HepG2 (cell line): ENCODE measurements at regions of chr6 and their contacts with region 1.

Region 1: GRCh38 chr6:31158140-31158862 is at the start of gene TCF19:
- DNase-seq: peak; percentile 99
- ATAC-seq: peak; percentile 94
- H3K4me3 ChIP-seq: peak within 1 kb of the TSS; percentile 76 to 90 (median 87)
- H3K27ac ChIP-seq: peak within 1 kb of the TSS; percentile 66
- H3K4me1 ChIP-seq: peaks cover 30% of the 10 kb centered on the region
- H3K27me3 ChIP-seq: no peaks in the 10 kb centered on the region
- CTCF ChIP-seq: no peak
- EP300 ChIP-seq: no peak
- POLR2A ChIP-seq: peak in 1 of 2 experiments; percentile 58; a peak in 1 of 4 replicates
- RAD21 ChIP-seq: no peak
- total RNA-seq, gene TCF19: 20.5 and 22.2 TPM in 2 replicates

Region 2: DNA sequence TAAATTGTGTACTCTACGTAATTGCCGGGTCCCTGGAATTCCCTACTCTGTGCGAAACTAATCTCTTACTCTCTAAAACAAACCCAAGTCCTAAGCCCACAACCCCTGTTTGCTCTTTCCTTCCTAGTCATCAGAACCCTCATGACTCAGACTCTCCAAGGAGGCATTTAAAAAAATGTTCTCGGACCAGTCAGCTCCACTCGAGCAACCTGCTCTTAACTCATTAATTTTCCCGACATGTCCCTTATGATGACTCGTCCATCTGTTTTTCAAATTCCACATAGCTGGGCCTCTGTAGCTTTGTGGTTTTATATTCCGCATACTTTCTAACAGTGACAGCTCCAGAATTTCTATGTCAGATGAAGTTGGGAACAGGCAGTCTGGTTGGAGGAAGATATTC is 150.6 kb before region 1 on chr6:
- CTCF ChIA-PET with region 1: no interaction called
- POLR2A ChIA-PET with region 1: no interaction called
- in situ Hi-C with region 1: no loop called
- intact Hi-C with region 1: no loop called
- DNase-seq: no peak
- ATAC-seq: no peak
- H3K4me3 ChIP-seq: no peak overlapping the region
- H3K27ac ChIP-seq: no peak overlapping the region
- H3K4me1 ChIP-seq: peaks cover 22% of the 10 kb centered on the region
- H3K27me3 ChIP-seq: peaks cover 0 to 12% of the 10 kb centered on the region in 2 experiments; a peak in 2 of 5 replicates
- CTCF ChIP-seq: no peak
- EP300 ChIP-seq: no peak
- POLR2A ChIP-seq: no peak
- RAD21 ChIP-seq: no peak

Region 3: DNA sequence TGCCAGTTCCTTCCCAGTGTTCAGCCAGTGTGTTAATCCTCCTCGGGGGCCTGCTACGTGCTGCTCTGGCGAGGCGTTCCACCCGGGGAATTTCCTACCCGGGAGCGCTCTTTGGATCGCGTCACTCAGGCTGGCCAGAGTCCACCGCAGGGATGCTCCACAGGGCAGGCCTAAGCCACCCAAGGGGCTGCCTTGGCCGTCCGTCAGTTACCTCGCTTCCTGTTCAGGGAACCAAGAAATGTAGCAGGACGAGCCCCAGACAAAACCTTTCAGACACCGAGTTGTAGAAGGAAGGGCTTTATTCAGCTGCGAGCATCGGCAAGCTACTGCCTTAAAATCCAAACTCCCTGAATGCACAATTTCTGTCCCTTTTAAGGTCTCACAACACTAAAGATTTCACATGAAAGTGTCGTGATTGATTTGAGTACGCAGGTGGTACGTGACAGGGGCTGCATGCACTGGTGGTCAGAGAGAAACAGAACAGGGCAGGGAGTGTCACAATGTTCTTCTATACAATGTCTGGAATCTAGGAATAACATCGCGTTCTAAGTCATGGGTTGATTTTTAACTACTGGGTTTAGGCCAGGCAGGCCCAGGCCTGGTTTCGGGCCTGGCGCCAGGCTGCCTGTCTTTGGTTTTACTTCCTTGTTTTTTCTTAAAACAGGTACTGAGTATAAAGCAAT is 27.9 kb after region 1 on chr6:
- CTCF ChIA-PET with region 1: no interaction called
- POLR2A ChIA-PET with region 1: interaction called, 5 read pairs
- in situ Hi-C with region 1: no loop called
- intact Hi-C with region 1: loop called (anchors 1 kb)
- DNase-seq: peak; percentile 75
- ATAC-seq: peak; percentile 88
- H3K4me3 ChIP-seq: peak overlapping the region; percentile 57 to 87 (median 70)
- H3K27ac ChIP-seq: peak overlapping the region; percentile 94
- H3K4me1 ChIP-seq: peaks cover 44% of the 10 kb centered on the region
- H3K27me3 ChIP-seq: no peaks in the 10 kb centered on the region
- CTCF ChIP-seq: no peak
- EP300 ChIP-seq: peak in 1 of 2 experiments; percentile 22; a peak in 1 of 4 replicates
- POLR2A ChIP-seq: peak in 1 of 2 experiments; percentile 87
- RAD21 ChIP-seq: no peak